ENCODE measurements at regions of chr10 and their contacts with region 1.

Region 1: GRCh38 chr10:14837757-14838581 is at the starts of genes CDNF, HSPA14 and MSANTD7:
- DNase-seq: peak; percentile 100
- ATAC-seq: peak; percentile 95
- H3K4me3 ChIP-seq: peak within 1 kb of the TSS; percentile 63 to 99 (median 98)
- H3K4me3 Mint-ChIP-seq: peak within 1 kb of the TSS; percentile 98
- H3K27ac ChIP-seq: peak within 1 kb of the TSS; percentile 83 to 85
- H3K27ac Mint-ChIP-seq: peak within 1 kb of the TSS; percentile 98
- H3K4me1 ChIP-seq: peaks cover 16 to 17% of the 10 kb centered on the region in 2 donors
- H3K4me1 Mint-ChIP-seq: peaks cover 20% of the 10 kb centered on the region
- H3K27me3 ChIP-seq: no peaks in the 10 kb centered on the region
- H3K27me3 Mint-ChIP-seq: no peaks in the 10 kb centered on the region
- CTCF ChIP-seq: no peak
- total RNA-seq, gene CDNF: 1.4 and 1.6 TPM in 2 replicates
- total RNA-seq, gene HSPA14: 12.5 and 12.8 TPM in 2 replicates
- total RNA-seq, gene MSANTD7: 12.9 and 15.2 TPM in 2 replicates

Region 2: GRCh38 chr10:14500172-14500765 is 337.7 kb before region 1 on chr10:
- CTCF ChIA-PET with region 1: interaction called, 18 read pairs
- POLR2A ChIA-PET with region 1: interaction called, 10 read pairs
- intact Hi-C with region 1: loop called (anchors 1 kb)
- DNase-seq: no peak
- ATAC-seq: no peak
- H3K4me3 ChIP-seq: no peak overlapping the region
- H3K4me3 Mint-ChIP-seq: no peak overlapping the region
- H3K27ac ChIP-seq: no peak overlapping the region
- H3K27ac Mint-ChIP-seq: no peak overlapping the region
- H3K4me1 ChIP-seq: peaks cover 13 to 16% of the 10 kb centered on the region in 2 donors
- H3K4me1 Mint-ChIP-seq: peaks cover 27% of the 10 kb centered on the region
- H3K27me3 ChIP-seq: no peaks in the 10 kb centered on the region
- H3K27me3 Mint-ChIP-seq: no peaks in the 10 kb centered on the region
- CTCF ChIP-seq: no peak

Region 3: DNA sequence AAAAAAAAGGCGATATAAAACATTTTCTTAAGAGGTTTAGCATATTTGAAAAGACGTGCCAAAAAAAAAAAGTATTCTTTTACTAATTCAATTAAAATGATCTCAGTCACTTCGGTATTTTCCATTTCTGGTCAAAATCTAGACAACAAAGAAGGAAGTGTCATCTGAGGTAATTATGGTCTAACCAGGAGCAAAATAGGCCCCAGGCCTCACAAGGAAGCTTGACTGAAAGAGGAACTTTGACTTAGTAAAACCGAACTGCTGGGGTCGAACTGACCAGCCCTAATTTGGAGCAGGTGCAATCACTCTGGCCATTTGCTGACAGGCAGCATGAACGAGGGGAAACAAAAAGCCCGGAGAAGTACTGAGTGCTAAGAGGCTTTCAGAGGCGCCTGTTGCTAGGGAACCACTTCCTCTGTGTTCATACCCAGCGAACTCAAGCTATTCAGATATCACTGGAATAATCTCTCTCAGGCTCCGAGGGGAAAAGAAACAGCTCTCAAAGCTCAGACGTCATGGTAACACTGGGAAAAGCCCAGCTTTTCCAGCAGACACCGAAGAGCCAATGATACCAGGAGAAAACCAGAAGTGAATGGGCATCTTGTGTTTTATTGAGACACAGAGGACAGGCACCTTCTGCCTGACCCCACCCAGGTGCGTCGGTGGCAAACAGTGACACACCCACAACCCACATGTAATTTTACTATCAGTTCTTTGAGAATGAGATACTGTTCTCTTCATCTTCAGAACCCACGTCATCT is 189.8 kb before region 1 on chr10:
- CTCF ChIA-PET with region 1: interaction called, 4 read pairs
- POLR2A ChIA-PET with region 1: interaction called, 3 read pairs
- intact Hi-C with region 1: loop called (anchors 1 kb)
- DNase-seq: peak; percentile 92
- ATAC-seq: peak; percentile 81
- H3K4me3 ChIP-seq: peak overlapping the region; percentile 29 to 58 (median 35)
- H3K4me3 Mint-ChIP-seq: peak overlapping the region; percentile 83
- H3K27ac ChIP-seq: peak overlapping the region; percentile 96 to 99
- H3K27ac Mint-ChIP-seq: peak overlapping the region; percentile 98
- H3K4me1 ChIP-seq: peaks cover 57 to 71% of the 10 kb centered on the region in 2 donors
- H3K4me1 Mint-ChIP-seq: peaks cover 82% of the 10 kb centered on the region
- H3K27me3 ChIP-seq: no peaks in the 10 kb centered on the region
- H3K27me3 Mint-ChIP-seq: no peaks in the 10 kb centered on the region
- CTCF ChIP-seq: no peak

Region 4: DNA sequence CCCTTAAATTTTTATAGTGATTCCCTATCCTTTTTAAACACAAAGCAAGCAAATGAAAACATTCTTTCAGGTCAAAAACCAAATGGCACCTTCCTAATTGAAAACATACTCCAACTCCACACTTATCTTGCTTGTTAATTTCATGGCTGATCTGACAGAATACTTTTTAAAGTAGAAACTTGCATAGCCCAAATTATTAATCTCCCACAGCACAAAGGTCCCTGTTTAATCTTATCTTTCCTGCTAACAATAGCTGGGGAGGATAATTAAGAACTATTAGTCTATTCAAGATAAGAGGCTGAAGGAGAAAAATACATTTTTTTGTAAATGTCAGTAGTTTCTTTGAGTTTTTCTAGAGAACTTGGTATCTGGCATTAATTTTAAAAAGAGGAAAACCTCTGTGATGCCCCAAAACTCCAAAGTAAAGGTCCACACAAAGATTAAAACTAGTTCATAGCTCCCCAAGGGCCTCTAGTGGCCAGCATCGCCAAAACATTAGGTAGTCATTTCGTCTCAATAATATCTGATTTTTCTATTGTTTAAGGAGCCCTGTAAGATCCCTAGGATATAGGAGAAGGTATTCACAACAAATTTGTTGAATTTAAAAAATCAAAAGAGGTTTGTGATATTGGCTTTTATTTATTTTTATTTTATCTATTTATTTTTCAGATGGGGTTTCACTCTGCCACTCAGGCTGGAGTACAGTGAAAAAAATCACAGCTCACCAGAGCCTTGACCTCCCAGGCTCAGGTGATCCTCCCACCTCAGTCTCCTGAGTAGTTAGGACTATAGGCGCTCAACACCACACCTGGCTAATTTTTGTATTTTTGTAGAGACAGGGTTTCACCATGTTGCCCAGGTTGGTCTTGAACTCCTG is 14.9 kb before region 1 on chr10:
- CTCF ChIA-PET with region 1: interaction called, 43 read pairs
- POLR2A ChIA-PET with region 1: interaction called, 6 read pairs
- intact Hi-C with region 1: loop called (anchors 1 kb)
- DNase-seq: peak; percentile 69
- ATAC-seq: peak; percentile 78
- H3K4me3 ChIP-seq: no peak overlapping the region
- H3K4me3 Mint-ChIP-seq: no peak overlapping the region
- H3K27ac ChIP-seq: no peak overlapping the region
- H3K27ac Mint-ChIP-seq: no peak overlapping the region
- H3K4me1 ChIP-seq: peaks cover 16 to 19% of the 10 kb centered on the region in 2 donors
- H3K4me1 Mint-ChIP-seq: peaks cover 32% of the 10 kb centered on the region
- H3K27me3 ChIP-seq: no peaks in the 10 kb centered on the region
- H3K27me3 Mint-ChIP-seq: no peaks in the 10 kb centered on the region
- CTCF ChIP-seq: peak; percentile 83

Region 5: GRCh38 chr10:14959276-14960057 is 121.5 kb after region 1 on chr10 and contains the start of gene MEIG1:
- CTCF ChIA-PET with region 1: interaction called, 9 read pairs
- POLR2A ChIA-PET with region 1: interaction called, 3 read pairs
- intact Hi-C with region 1: loop called (anchors 2 kb)
- DNase-seq: peak; percentile 94
- ATAC-seq: peak; percentile 83
- H3K4me3 ChIP-seq: peak within 1 kb of the TSS; percentile 83 to 99 (median 88)
- H3K4me3 Mint-ChIP-seq: peak within 1 kb of the TSS; percentile 99
- H3K27ac ChIP-seq: peak within 1 kb of the TSS; percentile 74 to 88
- H3K27ac Mint-ChIP-seq: peak within 1 kb of the TSS; percentile 98
- H3K4me1 ChIP-seq: peaks cover 5 to 17% of the 10 kb centered on the region in 2 donors
- H3K4me1 Mint-ChIP-seq: peaks cover 22% of the 10 kb centered on the region
- H3K27me3 ChIP-seq: no peaks in the 10 kb centered on the region
- H3K27me3 Mint-ChIP-seq: no peaks in the 10 kb centered on the region
- CTCF ChIP-seq: no peak
- total RNA-seq, gene MEIG1: 0.69 TPM in 1 of 2 replicates, not detected in the other

Region 6: DNA sequence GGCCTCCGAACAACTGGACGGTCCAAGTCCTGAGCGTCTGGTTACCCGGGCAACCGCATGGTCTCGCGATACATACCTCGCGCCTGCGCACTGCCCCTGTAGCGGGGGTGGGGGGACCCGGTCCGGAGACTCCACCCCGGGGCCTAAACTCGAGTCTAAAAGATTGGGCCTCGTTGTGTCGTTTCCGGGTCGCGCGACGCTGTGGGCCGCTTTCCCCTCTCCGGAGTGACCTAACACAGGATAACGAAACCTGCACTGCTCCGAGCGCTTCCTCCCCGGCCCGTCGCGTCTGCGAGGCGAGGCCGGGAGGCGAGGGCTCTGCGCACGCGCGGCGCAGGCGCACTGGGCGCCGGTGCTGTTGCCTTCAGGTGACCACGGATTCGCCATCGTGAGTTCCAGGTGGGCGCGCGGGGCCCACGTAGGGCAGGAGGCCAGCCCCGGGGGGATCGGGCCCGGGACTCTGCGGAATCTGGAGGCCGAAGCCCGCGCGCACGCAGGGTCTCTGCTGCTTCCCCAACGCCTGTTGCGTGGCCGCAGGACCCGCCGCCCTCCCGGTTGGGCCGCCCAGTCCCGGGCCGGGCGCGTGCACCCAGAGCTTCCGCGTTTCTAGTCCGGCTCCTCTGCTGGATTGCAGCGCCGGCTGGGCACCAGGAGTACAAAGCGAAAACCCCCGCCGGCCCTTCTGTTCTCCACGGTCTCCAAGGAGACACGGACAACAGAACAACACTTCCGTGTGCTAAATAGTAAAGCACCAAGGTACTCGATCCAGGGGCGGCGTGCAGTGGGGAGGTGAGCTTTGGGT is 259.2 kb after region 1 on chr10 and contains the start of gene RPP38:
- CTCF ChIA-PET with region 1: no interaction called
- POLR2A ChIA-PET with region 1: no interaction called
- intact Hi-C with region 1: loop called (anchors 2 kb)
- DNase-seq: peak; percentile 98
- ATAC-seq: peak; percentile 75
- H3K4me3 ChIP-seq: peak within 1 kb of the TSS; percentile 80 to 91 (median 87)
- H3K4me3 Mint-ChIP-seq: peak within 1 kb of the TSS; percentile 93
- H3K27ac ChIP-seq: peak within 1 kb of the TSS; percentile 92 to 96
- H3K27ac Mint-ChIP-seq: peak within 1 kb of the TSS; percentile 94
- H3K4me1 ChIP-seq: peaks cover 23 to 27% of the 10 kb centered on the region in 2 donors
- H3K4me1 Mint-ChIP-seq: peaks cover 26% of the 10 kb centered on the region
- H3K27me3 ChIP-seq: no peaks in the 10 kb centered on the region
- H3K27me3 Mint-ChIP-seq: no peaks in the 10 kb centered on the region
- CTCF ChIP-seq: no peak
- total RNA-seq, gene RPP38: 24.5 and 24.8 TPM in 2 replicates

Measured in B cell (primary cell).